Adrenal gland (tissue), 19 donors: ENCODE measurements at regions of chr11 and their contacts with region 1.

Region 1: DNA sequence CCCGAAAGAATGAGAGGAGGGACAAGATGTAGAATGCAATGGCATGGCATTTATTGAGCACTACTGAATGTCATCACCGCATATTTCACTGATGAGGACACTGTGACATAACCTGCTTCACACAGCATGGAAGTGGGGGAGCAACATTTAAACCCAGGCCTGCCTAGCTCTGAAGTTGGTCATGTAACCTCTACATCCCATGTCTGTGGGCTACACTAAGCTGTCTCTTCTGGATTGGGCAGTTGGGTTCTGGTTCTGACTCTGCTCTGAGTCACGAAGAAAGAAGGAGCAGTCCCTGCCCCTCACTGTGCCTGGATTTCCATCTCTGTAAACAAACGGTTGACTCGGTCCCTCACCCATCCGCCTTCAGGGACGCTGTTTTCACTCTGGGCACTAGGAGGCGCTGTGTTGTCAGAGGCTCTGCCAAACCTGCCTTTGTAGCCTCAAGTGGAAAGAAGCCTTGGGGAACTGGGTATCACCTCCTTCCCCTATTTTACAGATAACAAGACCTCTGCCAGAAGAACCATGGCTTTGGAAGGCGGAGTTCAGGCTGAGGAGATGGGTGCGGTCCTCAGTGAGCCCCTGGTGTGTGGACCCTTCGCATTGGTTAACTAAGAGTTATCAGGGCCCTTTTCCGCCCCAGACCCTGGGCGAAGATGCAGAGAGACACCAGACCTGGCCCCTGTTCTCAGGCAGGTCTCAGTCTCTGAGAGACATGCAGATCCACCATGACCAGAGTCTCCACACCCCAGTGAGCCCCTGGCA is 12.7 kb upstream of the ARHGEF17 start:
- DNase-seq: peak; percentile 66 to 87 (median 71)
- H3K4me3 ChIP-seq: no peak overlapping the region
- H3K27ac ChIP-seq: no peak overlapping the region
- H3K4me1 ChIP-seq: no peaks in the 10 kb centered on the region
- H3K27me3 ChIP-seq: no peaks in the 10 kb centered on the region
- CTCF ChIP-seq: peak; percentile 75 to 85 (median 80)
- POLR2A ChIP-seq: no peak

Region 2: DNA sequence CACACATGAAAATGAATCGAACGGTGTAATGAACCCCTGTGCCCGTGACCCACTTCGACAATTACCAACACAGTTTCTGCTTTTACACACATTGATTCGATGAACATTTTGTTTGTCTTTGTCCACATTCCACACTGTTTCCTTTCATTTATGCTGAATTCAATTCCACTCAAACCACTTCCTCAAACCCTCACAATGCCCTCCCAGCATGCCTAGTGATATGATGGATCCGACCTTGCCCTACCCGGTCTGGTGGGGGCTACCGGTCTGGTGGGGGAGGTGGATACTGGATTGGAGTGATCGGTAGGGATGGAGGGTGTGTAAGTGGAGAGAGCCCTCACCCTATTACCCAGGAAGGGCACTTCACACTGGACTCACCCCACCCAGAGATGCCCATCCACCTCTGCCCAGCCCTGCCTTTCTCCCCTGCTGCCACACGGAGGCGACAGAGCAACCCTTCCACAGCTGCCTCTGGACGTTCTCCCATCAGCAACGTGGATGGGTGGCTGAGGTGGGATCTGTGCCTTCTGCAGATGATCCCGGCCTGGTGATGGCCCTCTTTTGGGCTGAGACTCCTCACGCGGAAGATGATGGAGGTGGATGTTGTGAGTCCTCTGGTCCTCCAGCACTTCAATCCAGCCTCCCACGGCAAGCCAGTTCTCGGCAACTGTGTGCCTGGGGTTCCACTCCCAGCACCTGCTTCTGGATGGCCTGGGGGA is 110.3 kb before region 1 on chr11:
- intact Hi-C with region 1: loop called (anchors 2 to 5 kb)
- DNase-seq: peak; percentile 61 to 83 (median 78)
- H3K4me3 ChIP-seq: no peak overlapping the region
- H3K27ac ChIP-seq: no peak overlapping the region
- H3K4me1 ChIP-seq: peaks cover 10 to 15% of the 10 kb centered on the region in 2 donors
- H3K27me3 ChIP-seq: no peaks in the 10 kb centered on the region
- CTCF ChIP-seq: peak; percentile 80 to 95 (median 88)
- POLR2A ChIP-seq: no peak

Region 3: DNA sequence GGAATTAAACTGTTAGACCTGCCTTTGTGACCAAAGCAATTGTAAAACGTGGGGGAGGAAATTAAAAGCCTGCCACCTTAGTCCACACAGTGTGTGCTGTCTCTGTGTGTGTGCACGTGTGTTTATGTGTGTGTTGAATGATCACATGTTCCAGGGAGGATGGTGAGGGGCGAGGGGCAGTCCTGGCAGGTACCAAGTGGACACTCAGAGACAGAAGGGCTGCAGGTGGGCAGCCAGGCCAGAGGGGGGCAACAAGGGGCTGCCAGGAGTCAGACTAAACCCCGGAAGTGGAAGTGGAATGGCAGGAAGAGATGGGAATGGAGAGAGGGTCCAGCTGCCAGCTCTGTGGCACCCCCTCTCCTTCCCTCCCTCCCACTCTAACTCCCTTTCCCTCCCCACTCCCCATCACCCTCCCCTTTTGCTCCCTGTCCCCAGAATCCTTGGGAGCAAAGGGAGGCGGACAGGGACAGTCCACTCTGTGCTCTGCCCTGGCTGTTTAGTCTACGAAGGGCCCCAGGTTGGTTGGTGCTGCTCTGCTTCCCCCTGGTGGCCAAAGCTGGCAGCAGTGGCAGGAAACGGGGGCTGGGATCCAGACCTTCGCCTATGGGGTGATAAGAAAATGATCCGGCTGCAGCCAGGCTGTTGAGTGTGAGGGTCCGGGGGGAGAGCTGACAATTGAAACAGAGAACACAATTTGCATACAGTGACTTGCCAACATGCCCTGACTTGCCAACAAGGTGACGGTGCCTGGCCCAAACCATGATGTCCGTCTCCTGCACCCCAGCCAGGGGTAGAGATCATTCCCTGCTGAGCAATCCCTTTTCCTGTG is 52.9 kb before region 1 on chr11:
- intact Hi-C with region 1: no loop called
- DNase-seq: peak; percentile 76 to 88 (median 81)
- H3K4me3 ChIP-seq: no peak overlapping the region
- H3K27ac ChIP-seq: peak overlapping the region in 1 of 5 donors; percentile 15
- H3K4me1 ChIP-seq: peaks cover 8 to 25% of the 10 kb centered on the region in 2 donors
- H3K27me3 ChIP-seq: no peaks in the 10 kb centered on the region
- CTCF ChIP-seq: peak; percentile 73 to 94 (median 90)
- POLR2A ChIP-seq: no peak

Region 4: GRCh38 chr11:73335204-73335923 is 40.0 kb after region 1 on chr11:
- intact Hi-C with region 1: loop called (anchors 5 kb)
- DNase-seq: peak; percentile 73 to 94 (median 87)
- H3K4me3 ChIP-seq: no peak overlapping the region
- H3K27ac ChIP-seq: peak overlapping the region in 2 of 5 donors; percentile 3 to 78
- H3K4me1 ChIP-seq: peaks cover 0 to 21% of the 10 kb centered on the region in 2 donors
- H3K27me3 ChIP-seq: no peaks in the 10 kb centered on the region
- CTCF ChIP-seq: peak; percentile 87 to 99 (median 94)
- POLR2A ChIP-seq: no peak

Region 5: DNA sequence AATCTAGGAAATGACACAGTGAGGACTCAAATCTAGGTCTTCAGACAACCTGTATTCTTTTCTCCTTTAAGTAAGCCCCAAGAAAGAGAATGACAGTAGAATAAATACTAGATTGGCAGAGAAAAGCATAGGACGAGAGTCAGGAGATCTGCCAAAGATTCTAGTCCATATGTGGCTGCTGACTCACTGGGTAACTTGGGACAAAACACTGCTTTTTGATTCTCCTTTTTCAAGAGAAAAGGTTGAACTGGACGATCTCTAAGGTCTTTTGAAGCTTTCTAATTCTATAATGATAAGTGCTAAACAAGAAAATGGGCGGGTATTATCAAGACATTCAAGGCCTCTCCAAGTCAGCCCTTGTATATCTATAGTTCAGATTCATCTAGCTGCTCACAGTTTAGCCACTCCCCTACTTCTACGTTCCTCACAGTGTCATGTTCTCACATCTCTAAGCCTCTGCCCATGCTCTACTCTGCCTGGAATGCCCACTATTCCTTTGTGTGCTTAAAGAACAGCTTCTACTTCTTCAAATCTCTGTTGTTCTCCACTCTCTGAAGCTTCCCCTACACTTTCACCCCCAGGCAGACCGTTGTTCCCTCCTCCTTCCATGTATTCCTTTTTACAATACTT is 133.8 kb after region 1 on chr11:
- intact Hi-C with region 1: no loop called
- DNase-seq: no peak
- H3K4me3 ChIP-seq: no peak overlapping the region
- H3K27ac ChIP-seq: no peak overlapping the region
- H3K4me1 ChIP-seq: peaks cover 0 to 5% of the 10 kb centered on the region in 2 donors
- H3K27me3 ChIP-seq: no peaks in the 10 kb centered on the region
- CTCF ChIP-seq: no peak
- POLR2A ChIP-seq: no peak

Region 6: GRCh38 chr11:73661035-73661628 is 365.7 kb after region 1 on chr11:
- intact Hi-C with region 1: loop called in 1 of 2 experiments (anchors 5 kb)
- DNase-seq: peak; percentile 86 to 95 (median 90)
- H3K4me3 ChIP-seq: peak overlapping the region in 1 of 4 donors; percentile 45
- H3K27ac ChIP-seq: no peak overlapping the region
- H3K4me1 ChIP-seq: peaks cover 0 to 19% of the 10 kb centered on the region in 2 donors
- H3K27me3 ChIP-seq: no peaks in the 10 kb centered on the region
- CTCF ChIP-seq: peak; percentile 89 to 99 (median 98)
- POLR2A ChIP-seq: no peak